ENCODE measurements at regions of chr3 and their contacts with region 1.

Region 1: GRCh38 chr3:11060500-11061251 is 68.1 kb downstream of the SLC6A1 start:
- DNase-seq: peak; percentile 52
- H3K27ac ChIP-seq: peak overlapping the region; percentile 64
- CTCF ChIP-seq: peak; percentile 90

Region 2: GRCh38 chr3:10703875-10704274 is 356.8 kb before region 1 on chr3:
- CTCF ChIA-PET with region 1: no interaction called
- POLR2A ChIA-PET with region 1: no interaction called
- DNase-seq: no peak
- H3K27ac ChIP-seq: no peak overlapping the region
- CTCF ChIP-seq: no peak

Region 3: DNA sequence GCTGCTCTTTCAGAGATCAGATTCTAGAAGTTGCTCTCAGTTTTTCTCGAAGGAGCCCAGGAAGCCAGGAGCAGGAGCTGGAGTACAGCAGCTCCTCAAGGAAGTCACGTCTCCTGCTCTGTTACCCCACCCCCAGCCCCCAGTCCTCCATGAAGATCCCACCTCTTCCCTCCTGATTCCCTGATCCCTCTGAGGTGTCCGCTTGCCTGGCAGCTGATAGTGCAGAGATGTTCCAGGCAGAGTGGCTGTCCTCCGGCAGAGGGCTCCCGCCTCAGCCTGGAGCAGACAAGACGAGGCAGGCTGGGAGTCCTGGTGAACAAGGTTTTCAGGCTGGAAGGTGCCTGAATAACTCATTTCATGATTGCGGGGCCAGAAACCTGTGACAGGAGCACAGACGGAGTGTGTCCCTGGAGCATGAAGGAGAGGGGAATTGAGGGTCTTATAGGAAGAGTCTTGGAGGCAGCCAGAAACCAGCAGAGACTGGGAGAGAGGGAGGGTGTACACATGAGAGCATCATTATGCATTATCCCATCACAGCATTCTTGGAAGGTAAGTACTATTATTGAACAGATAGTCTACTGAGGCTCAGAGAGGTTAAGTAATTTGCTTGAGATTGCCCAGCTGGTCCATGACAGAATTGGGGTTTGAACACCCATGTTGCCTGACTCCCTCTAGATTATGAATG is 94.8 kb after region 1 on chr3:
- CTCF ChIA-PET with region 1: interaction called, 18 read pairs
- POLR2A ChIA-PET with region 1: no interaction called
- DNase-seq: peak; percentile 69
- H3K27ac ChIP-seq: peak overlapping the region; percentile 87
- CTCF ChIP-seq: peak; percentile 93

Region 4: GRCh38 chr3:11335056-11335608 is 274.5 kb after region 1 on chr3:
- CTCF ChIA-PET with region 1: interaction called, 20 read pairs
- POLR2A ChIA-PET with region 1: no interaction called
- DNase-seq: peak; percentile 53
- H3K27ac ChIP-seq: peak overlapping the region; percentile 67
- CTCF ChIP-seq: peak; percentile 72

Region 5: DNA sequence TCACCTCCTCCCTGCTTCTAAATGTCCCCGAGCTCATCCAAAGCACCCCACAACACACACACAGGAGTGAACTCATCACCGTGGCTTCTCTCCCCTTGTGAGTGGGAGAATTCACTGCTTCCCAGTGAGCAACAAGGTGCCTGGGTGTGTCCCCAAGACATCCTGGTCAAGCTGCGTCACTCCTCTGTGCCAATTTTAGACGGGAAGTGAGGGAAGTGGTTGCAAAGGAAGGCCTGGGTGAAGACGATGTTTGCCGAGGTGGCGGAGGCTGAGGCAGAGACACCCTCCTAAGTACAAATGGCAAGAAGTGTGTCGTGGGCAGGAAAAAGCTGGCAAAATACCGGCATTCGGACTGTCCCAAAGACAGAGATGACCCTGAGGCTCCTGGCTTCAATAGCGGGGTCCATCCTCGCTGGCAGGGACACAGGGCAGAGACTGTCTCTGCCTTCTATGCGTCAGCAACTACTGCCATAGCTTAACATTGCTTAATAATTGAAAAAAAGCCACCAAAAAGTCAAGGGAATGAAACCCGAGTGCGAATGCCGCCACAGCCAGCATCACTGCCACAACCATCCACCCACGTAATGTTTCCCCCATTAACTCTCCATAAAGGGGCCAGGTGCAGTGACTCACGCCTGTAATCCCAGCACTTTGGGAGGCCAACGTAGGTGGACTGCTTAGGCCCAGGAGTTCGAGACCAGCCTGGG is 510.3 kb after region 1 on chr3:
- CTCF ChIA-PET with region 1: no interaction called
- POLR2A ChIA-PET with region 1: no interaction called
- DNase-seq: no peak
- H3K27ac ChIP-seq: peak overlapping the region; percentile 99
- CTCF ChIP-seq: no peak

Measured in RWPE1 (cell line).